ENCODE measurements at regions of chr7 and their contacts with region 1.

Region 1: GRCh38 chr7:117127585-117128168 is 174.4 kb downstream of the ST7 start:
- DNase-seq: peak; percentile 75
- ATAC-seq: peak; percentile 29
- H3K4me3 Mint-ChIP-seq: no peak overlapping the region
- H3K27ac Mint-ChIP-seq: no peak overlapping the region
- H3K4me1 Mint-ChIP-seq: peaks cover 12% of the 10 kb centered on the region
- H3K27me3 Mint-ChIP-seq: no peaks in the 10 kb centered on the region
- CTCF ChIP-seq: peak; percentile 97

Region 2: DNA sequence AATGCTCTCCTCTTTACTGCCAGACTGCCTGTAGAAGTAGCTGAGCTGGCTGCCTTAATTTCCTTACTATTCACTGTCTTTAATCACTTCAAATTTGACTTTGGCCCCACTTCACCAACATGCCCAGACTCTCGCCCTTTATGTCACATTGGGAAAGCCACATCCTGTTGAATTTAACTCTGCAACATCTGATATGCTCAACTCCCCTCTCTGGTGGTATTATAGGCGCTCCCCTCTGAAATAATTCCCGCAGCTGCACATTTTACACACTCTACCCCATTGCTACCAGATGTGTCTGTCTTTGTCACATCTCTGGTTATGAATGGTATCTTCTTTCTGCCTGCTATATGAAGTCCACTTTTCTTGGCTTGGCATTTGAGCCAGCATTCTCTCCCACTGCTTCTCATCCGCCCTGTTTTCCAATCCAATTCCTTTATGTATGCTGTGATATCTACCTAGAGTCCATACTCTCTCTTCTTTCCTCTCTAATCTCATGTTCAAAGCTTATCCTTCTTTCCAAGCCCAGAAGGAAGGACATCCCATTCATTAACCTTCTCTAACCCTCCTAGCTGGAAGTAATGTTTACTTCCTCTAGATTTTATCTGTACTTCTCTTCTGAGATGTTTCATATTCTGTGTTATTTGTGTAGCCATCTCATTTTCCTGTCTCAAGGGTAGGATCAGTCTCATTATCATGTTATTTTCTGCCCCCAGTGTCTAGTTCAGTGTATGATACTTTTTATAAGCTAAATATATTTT is 39.9 kb before region 1 on chr7:
- CTCF ChIA-PET with region 1: interaction called, 10 read pairs
- POLR2A ChIA-PET with region 1: no interaction called
- intact Hi-C with region 1: no loop called
- DNase-seq: peak; percentile 14
- ATAC-seq: peak; percentile 68
- H3K4me3 Mint-ChIP-seq: no peak overlapping the region
- H3K27ac Mint-ChIP-seq: no peak overlapping the region
- H3K4me1 Mint-ChIP-seq: peaks cover 22% of the 10 kb centered on the region
- H3K27me3 Mint-ChIP-seq: no peaks in the 10 kb centered on the region
- CTCF ChIP-seq: no peak

Region 3: GRCh38 chr7:117110480-117111337 is 17.0 kb before region 1 on chr7:
- CTCF ChIA-PET with region 1: interaction called, 27 read pairs
- POLR2A ChIA-PET with region 1: no interaction called
- intact Hi-C with region 1: no loop called
- DNase-seq: peak; percentile 77
- ATAC-seq: peak; percentile 97
- H3K4me3 Mint-ChIP-seq: peak overlapping the region; percentile 60
- H3K27ac Mint-ChIP-seq: peak overlapping the region; percentile 93
- H3K4me1 Mint-ChIP-seq: peaks cover 36% of the 10 kb centered on the region
- H3K27me3 Mint-ChIP-seq: no peaks in the 10 kb centered on the region
- CTCF ChIP-seq: no peak